Activated CD4-positive, alpha-beta T cell treated with anti-CD3 and anti-CD28 coated beads, Interleukin-2, amount 10 ng/mL, durations not matched to agents 24 days and 14 days (primary cell): ENCODE measurements at regions of chr1 and their contacts with region 1.

Region 1: DNA sequence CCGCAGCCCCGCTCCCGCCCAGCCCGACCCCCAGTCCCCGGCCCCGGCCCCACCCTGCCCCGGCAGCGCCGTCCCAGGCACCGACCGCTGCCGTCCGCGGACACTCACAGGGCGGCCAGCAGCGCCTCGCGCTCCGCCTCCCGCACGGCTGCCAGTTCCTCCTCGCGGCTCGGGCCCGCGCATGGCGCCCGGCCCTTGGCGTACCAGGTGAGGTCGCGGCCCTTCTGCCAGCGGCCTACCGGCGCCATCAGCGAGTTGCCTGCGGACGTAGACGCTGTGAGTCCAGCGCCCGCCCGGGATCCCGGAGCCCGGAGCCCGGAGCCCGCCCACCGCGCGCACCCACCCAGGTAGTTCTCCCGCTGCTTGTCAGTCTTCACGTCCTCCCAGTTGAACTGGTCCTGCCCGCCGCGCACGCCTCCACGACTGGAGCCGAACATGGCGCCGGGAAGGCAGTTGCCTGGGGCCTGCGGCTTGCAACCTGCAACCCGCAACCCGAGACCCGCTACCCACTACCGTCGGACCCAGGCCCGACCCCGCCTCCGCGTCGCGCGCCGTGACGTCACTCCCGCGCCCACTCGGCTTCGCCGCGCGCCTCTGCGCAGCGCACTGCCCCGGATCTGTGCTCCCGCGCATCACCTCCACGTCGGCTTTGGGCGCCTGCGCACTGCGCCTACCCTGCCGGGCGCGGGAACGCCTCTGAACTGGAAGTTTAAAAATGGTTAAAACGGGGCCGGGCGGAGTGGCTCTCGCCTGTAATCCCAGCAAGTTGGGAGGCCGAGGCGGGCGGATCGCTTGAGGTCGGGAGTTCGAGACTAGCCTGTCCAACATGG is at the start of gene C1orf35:
- DNase-seq: peak; percentile 99
- H3K4me3 Mint-ChIP-seq: peak within 1 kb of the TSS; percentile 93
- H3K27ac Mint-ChIP-seq: peak within 1 kb of the TSS; percentile 97
- H3K4me1 Mint-ChIP-seq: peaks cover 24% of the 10 kb centered on the region
- H3K27me3 Mint-ChIP-seq: peaks cover 2% of the 10 kb centered on the region
- total RNA-seq, gene C1orf35: 27.5 and 33.0 TPM in 2 replicates

Region 2: DNA sequence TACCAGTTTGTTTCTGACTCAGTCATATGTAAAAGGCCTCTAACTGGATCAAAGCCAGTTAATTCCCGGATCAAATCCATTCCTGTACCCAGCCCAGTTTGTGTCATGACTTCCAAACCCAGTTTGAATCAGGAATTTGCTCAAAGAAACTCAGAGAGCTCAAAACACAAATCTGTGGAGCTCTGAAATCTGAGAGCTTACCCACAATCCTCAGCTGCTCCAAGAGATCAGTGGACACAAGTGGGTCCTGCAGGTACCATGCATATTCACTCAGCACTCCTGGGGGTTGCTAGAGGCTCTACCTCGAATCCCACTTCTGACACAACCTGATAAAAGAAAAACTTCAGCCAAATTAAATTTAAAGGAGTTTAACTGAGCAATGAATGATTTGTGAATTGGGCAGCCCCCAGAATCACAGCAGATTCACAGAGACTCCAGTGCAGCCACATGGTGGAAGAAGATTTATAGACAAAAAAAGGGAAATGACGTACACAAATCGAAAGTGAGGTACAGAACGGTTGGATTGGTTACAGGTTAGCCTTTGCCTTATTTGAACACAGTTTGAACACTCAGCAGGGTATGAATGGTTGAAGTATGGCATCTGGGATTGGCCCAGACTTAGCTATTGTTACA is 18.0 kb after region 1 on chr1:
- intact Hi-C with region 1: no loop called
- DNase-seq: no peak
- H3K4me3 Mint-ChIP-seq: no peak overlapping the region
- H3K27ac Mint-ChIP-seq: no peak overlapping the region
- H3K4me1 Mint-ChIP-seq: peaks cover 5% of the 10 kb centered on the region
- H3K27me3 Mint-ChIP-seq: peaks cover 4% of the 10 kb centered on the region

Region 3: DNA sequence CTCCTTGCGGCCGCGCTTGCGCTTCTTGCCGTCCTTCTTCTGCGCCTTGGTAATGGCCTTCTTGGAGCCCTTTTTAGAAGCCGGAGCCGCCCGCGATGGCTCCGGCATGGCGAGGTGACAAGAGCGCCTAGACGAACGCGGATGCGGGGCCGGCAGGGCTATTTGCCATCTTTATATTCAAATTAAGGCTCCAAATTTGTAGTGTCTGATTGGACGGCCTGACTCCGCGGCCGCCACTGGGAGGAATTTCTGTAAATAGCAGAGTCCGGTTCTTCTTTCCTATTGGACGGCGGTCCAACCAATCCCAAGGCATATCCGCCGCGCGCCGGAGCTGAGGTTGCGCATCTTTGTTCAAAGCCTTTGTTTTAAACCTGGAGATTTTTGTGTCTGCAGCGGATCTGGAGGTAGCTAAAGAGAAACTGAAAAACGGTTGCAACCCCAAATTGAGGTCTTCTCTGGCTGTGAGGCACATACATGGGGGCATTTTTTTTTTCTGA is 361.5 kb after region 1 on chr1:
- intact Hi-C with region 1: loop called (anchors 2 kb)
- DNase-seq: peak; percentile 97
- H3K4me3 Mint-ChIP-seq: peak overlapping the region; percentile 87
- H3K27ac Mint-ChIP-seq: peak overlapping the region; percentile 88
- H3K4me1 Mint-ChIP-seq: peaks cover 50% of the 10 kb centered on the region
- H3K27me3 Mint-ChIP-seq: peaks cover 12% of the 10 kb centered on the region